ENCODE measurements at regions of chr1 and their contacts with region 1.

Region 1: DNA sequence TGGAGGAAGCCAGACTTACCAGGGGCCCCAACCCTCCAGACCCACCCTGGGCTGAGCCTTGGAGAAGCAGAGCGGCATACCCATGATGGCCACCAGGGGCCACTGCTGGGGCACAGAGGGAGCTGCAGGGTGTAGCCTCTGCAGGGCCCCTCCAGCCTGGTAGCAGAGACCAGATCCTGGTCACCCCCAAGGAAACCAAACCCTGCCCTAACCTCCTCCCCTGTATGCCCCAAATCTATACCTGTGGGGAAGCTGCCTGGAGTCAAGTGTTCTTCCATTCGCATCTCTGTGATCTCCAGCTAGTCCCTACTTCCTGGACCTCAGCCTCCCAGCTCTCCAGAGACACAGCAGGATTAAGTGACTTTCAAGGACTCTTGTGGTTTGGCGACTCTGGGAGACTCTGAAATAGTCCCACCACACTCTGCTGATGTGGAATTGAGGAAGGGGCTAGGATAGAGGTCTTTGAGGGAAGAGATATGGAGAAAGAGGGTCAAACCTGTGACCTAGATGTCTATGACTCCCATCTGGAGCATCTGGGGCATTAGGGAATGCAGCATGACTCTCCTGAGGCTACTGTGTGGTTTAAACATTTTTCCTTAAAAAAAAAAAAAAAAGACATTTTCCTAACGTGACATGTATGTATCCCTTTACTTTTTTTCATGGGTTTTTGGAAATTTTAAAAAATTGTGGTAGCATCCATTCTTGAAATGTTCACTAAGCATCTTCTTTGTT is 119.2 kb upstream of the IPO9 start:
- DNase-seq: peak; percentile 87
- H3K4me3 ChIP-seq: no peak overlapping the region
- H3K27ac ChIP-seq: peak overlapping the region; percentile 62 to 98; a peak in 3 of 4 replicates
- H3K4me1 ChIP-seq: peaks cover 19 to 71% of the 10 kb centered on the region in 2 experiments; a peak in 3 of 4 replicates
- H3K27me3 ChIP-seq: no peaks in the 10 kb centered on the region
- CTCF ChIP-seq: peak; percentile 86
- EP300 ChIP-seq: no peak
- RAD21 ChIP-seq: peak; percentile 86

Region 2: DNA sequence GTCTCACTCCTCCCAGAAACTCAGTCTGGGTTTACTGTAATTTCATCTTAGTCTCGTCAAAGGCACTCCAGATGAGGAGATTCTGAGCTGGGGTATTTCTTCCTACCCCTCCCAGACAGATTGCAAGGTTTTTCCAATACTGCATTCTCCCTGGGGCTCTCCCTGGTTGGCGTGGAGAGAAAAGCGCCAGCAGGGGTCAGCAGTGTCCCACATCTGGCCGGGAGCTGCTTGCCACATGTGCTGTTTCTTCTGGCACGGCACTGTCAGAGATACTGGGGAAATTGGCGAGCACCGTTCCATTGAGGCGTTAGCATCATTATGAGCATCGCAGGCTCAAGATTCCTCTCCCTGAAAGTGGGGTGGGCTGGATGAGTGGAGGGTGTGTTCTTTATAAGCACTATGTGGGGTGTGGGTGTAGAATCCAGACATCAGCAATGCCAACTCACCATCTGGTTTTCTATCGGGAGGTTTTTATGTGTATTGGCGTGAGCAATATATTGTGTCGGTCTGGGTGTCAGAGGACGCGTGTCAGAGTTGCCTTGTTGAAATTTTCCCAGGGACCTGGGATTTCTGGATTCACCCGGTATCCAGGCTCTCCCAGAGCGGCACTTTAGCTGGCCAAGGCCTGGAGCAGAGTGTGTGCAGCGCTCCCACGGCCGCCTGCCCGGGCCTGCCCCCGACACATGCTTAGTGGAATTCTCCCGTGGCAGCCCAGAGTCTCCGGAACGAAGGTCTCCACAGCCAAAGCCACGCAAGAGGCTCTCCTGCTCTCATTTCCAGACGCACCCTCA is 178.8 kb before region 1 on chr1:
- CTCF ChIA-PET with region 1: interaction called, 196 read pairs
- POLR2A ChIA-PET with region 1: no interaction called
- DNase-seq: peak; percentile 89
- H3K4me3 ChIP-seq: no peak overlapping the region
- H3K27ac ChIP-seq: peak overlapping the region in 1 of 2 experiments; percentile 62; a peak in 2 of 4 replicates
- H3K4me1 ChIP-seq: peaks cover 11 to 36% of the 10 kb centered on the region in 2 experiments; a peak in 3 of 4 replicates
- H3K27me3 ChIP-seq: no peaks in the 10 kb centered on the region
- CTCF ChIP-seq: peak; percentile 90
- EP300 ChIP-seq: no peak
- RAD21 ChIP-seq: peak; percentile 93

Region 3: DNA sequence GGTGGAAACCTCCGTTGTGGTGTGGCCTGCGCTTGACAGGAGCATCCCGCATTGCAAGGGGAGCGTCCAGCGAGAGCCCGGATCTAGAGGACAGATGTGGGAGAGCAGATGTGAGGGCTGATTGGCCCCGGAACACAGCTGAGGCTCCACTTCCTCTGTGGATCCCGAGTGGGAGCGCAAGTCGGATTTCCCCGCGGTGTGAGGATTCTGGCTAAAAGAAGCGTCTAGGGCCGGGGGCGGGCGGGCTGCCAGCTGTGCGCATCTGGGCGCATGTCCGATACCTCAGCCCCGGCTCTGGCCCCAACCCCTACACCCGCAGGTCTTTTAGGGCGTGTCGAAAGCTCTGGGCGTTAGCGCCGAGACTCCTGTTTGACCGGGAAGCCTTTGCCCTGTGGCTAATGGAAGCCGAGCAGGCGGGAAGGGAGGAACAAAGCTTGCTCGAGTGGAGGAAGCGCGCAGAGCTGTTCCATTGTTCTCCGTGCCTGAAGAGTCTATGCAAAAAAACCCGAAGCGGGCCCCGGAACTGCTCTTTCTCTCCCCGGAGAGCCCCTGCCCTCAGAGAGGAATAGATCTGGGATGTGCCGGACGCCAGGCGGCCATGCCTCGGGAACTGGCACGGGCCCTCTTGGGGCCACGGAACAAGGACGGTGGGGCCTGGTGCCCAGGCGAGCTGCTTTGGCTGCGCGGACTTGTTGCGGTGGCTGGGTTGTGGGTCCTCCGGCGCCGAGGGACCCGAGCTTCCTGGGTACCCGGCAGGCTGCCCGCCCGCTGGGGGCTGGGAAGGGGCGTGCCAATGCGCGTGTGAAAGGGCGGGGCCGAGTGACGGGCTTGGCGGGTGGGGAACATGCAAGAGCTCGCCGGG is 59.7 kb before region 1 on chr1:
- CTCF ChIA-PET with region 1: interaction called, 33 read pairs
- POLR2A ChIA-PET with region 1: no interaction called
- DNase-seq: peak; percentile 85
- H3K4me3 ChIP-seq: peak overlapping the region; percentile 55 to 63
- H3K27ac ChIP-seq: peak overlapping the region; percentile 50 to 85; a peak in 3 of 4 replicates
- H3K4me1 ChIP-seq: peaks cover 48 to 63% of the 10 kb centered on the region in 2 experiments
- H3K27me3 ChIP-seq: no peaks in the 10 kb centered on the region
- CTCF ChIP-seq: no peak
- EP300 ChIP-seq: no peak
- RAD21 ChIP-seq: no peak

Region 4: DNA sequence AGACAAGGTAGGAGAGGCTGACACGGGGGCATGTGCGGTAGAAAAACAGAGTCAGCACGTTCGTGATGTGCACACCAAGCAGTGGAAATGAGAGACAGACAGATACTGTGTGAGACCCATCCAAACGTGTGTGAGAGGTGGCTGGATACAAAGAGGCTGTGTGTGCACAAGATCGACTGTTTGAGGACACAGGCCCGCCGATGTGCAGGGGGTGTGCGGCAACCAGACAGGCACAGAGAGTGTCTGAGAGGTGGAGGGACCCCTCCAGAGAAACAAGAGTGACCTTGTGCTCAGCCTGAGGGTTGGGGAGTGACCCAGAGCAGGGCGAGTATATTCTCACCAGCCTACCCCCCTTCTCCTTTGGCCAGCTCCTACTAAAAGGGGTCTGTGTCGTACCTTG is 21.4 kb after region 1 on chr1:
- CTCF ChIA-PET with region 1: interaction called, 17 read pairs
- POLR2A ChIA-PET with region 1: no interaction called
- DNase-seq: no peak
- H3K4me3 ChIP-seq: no peak overlapping the region
- H3K27ac ChIP-seq: peak overlapping the region; percentile 39 to 67
- H3K4me1 ChIP-seq: peaks cover 19 to 31% of the 10 kb centered on the region in 2 experiments
- H3K27me3 ChIP-seq: no peaks in the 10 kb centered on the region
- CTCF ChIP-seq: no peak
- EP300 ChIP-seq: no peak
- RAD21 ChIP-seq: no peak

Region 5: GRCh38 chr1:201766131-201766866 is 56.6 kb after region 1 on chr1:
- CTCF ChIA-PET with region 1: interaction called, 827 read pairs
- POLR2A ChIA-PET with region 1: no interaction called
- DNase-seq: no peak
- H3K4me3 ChIP-seq: no peak overlapping the region
- H3K27ac ChIP-seq: peak overlapping the region; percentile 87 to 98
- H3K4me1 ChIP-seq: peaks cover 14 to 64% of the 10 kb centered on the region in 2 experiments
- H3K27me3 ChIP-seq: no peaks in the 10 kb centered on the region
- CTCF ChIP-seq: no peak
- EP300 ChIP-seq: peak in 1 of 2 experiments; percentile 90; a peak in 3 of 4 replicates
- RAD21 ChIP-seq: no peak

Region 6: DNA sequence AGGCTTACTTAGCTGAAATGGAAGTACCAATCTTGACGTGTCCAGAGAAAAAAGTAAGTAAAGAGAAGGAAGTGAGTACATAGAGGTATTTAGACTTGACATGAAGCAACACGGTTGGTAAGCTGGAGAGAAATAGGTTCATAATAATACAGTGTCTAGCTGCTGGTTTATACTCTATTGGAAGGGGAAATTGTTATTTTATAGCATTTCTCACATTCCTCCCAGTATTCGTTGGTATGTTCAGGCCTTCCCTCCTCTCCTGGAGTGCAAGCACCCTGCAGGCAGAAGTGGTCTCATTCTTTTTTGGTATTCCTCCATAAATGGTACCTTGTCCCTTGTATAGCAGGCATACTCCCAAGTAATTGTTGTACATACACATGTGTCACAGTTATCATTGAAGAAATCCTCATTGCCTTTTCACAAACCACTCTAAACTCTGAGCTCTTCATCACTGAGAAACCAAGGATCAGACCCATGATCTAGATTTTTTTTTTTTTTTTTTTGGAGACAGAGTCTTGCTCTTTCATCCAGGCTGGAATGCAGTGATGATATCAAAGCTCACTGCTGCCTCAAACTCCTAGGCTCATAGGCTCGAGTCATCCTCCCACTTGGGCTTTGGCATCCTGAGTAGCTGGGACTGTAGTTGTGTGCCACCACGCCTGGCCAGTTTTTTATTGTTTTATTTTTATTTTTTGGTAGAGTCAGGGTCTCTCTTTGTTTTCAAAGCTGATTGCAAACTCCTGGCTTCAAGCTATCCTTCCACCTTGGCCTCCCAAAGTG is 109.4 kb after region 1 on chr1:
- CTCF ChIA-PET with region 1: interaction called, 15 read pairs
- POLR2A ChIA-PET with region 1: no interaction called
- DNase-seq: no peak
- H3K4me3 ChIP-seq: no peak overlapping the region
- H3K27ac ChIP-seq: peak overlapping the region in 1 of 2 experiments; percentile 22; a peak in 1 of 4 replicates
- H3K4me1 ChIP-seq: no peaks in the 10 kb centered on the region; a peak in 1 of 4 replicates
- H3K27me3 ChIP-seq: no peaks in the 10 kb centered on the region
- CTCF ChIP-seq: no peak
- EP300 ChIP-seq: no peak
- RAD21 ChIP-seq: no peak

Region 7: DNA sequence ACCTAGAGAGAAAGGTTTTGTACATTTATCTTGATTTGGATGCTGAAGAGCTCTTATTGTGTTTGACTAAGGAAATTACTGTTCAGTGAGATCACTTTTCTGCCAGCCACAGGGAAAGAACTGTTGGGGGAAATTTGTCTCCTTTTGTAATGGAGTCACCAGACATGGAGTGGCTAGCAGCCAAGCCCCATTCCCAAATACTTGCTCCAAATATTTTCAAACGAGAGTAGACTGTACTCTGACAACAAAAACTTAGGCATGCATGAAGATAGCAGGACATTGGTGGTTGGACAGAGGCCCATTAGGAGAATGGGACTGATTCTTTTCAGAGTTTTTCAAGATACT is 140.3 kb after region 1 on chr1:
- CTCF ChIA-PET with region 1: no interaction called
- POLR2A ChIA-PET with region 1: no interaction called
- DNase-seq: no peak
- H3K4me3 ChIP-seq: peak overlapping the region in 1 of 2 experiments; percentile 27; a peak in 1 of 4 replicates
- H3K27ac ChIP-seq: peak overlapping the region; percentile 74 to 86; a peak in 3 of 4 replicates
- H3K4me1 ChIP-seq: peaks cover 5 to 25% of the 10 kb centered on the region in 2 experiments
- H3K27me3 ChIP-seq: no peaks in the 10 kb centered on the region
- CTCF ChIP-seq: no peak
- EP300 ChIP-seq: peak in 1 of 2 experiments; percentile 66; a peak in 2 of 4 replicates
- RAD21 ChIP-seq: no peak